ENCODE measurements at regions of chr3 and their contacts with region 1.

Region 1: GRCh38 chr3:151468284-151468917 is 7.5 kb upstream of the IGSF10 start:
- DNase-seq: peak; percentile 2 to 49 (median 23)
- H3K4me3 ChIP-seq: no peak overlapping the region
- H3K4me3 Mint-ChIP-seq: no peak overlapping the region
- H3K27ac ChIP-seq: no peak overlapping the region
- H3K27ac Mint-ChIP-seq: no peak overlapping the region
- H3K4me1 ChIP-seq: no peaks in the 10 kb centered on the region
- H3K4me1 Mint-ChIP-seq: no peaks in the 10 kb centered on the region
- H3K27me3 ChIP-seq: no peaks in the 10 kb centered on the region
- H3K27me3 Mint-ChIP-seq: peaks cover 10 to 23% of the 10 kb centered on the region in 2 donors

Region 2: DNA sequence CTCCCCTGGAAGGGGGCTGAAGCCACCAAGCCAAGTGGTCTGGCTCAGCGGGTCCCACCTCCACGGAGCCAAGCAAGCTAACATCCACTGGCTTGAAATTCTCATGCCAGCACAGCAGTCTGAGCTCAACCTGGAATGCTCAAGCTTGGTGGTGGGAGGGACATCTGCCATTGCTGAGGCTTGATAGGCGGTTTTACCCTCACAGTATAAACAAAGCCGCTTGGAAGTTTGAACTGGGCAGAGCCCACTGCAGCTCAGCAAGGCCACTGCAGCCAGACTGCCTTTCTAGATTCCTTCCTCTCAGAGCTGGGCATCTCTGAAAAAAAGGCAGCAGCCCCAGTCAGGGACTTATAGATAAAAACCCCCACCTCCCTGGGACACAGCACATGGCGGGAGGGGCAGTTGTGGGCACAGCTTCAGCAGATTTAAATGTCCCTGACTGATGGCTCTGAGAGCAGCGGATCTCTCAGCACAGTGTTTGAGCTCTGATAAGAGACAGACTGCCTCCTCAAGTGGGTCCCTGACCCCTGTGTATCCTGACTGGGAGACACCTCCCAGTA is 15.6 kb after region 1 on chr3:
- CTCF ChIA-PET with region 1: interaction called, 13 read pairs
- POLR2A ChIA-PET with region 1: no interaction called
- DNase-seq: no peak
- H3K4me3 ChIP-seq: no peak overlapping the region
- H3K4me3 Mint-ChIP-seq: no peak overlapping the region
- H3K27ac ChIP-seq: no peak overlapping the region
- H3K27ac Mint-ChIP-seq: no peak overlapping the region
- H3K4me1 ChIP-seq: no peaks in the 10 kb centered on the region
- H3K4me1 Mint-ChIP-seq: no peaks in the 10 kb centered on the region
- H3K27me3 ChIP-seq: no peaks in the 10 kb centered on the region
- H3K27me3 Mint-ChIP-seq: peaks cover 14 to 48% of the 10 kb centered on the region in 2 donors

Region 3: DNA sequence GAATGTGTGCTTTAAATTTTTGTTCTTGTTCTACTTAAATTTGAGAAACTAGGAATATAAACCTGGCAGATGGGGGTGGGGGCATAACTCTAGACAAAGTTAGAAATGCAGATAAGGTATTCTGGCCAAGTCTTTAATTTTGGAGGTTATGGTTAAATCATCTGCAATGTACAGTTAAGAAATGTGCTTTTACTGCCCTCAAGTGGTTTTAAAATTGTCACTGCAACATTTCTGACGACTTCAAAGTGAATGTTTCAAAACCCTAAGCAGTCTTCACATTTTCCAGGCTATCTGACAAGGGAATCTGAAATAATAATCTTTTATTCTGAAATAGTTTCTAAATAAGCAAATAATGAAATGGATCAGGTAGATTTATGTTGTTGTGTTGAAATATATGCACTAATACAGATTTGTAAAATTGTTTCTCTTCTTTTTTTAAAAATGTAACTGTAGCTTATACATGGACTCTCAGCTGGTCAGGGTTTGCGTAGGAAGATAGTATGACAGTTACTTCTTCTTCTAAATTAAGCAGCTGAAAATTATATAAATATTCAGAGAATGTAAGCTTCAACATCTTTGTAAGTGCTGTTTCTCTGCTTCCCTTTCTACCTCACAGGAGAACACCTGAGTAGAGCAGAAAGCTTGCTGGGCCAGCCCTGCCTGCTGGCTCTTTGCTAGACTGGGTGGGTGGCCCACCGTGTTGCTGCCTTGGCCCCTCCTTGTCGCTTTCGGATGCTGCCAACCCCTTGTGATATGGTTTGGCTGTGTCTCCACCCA is 450.0 kb after region 1 on chr3:
- CTCF ChIA-PET with region 1: interaction called, 16 read pairs
- POLR2A ChIA-PET with region 1: interaction called, 4 read pairs
- DNase-seq: peak in 2 of 5 donors; percentile 4 to 24
- H3K4me3 ChIP-seq: no peak overlapping the region
- H3K4me3 Mint-ChIP-seq: no peak overlapping the region
- H3K27ac ChIP-seq: no peak overlapping the region
- H3K27ac Mint-ChIP-seq: peak overlapping the region in 2 of 8 donors; percentile 23 to 70
- H3K4me1 ChIP-seq: no peaks in the 10 kb centered on the region
- H3K4me1 Mint-ChIP-seq: no peaks in the 10 kb centered on the region
- H3K27me3 ChIP-seq: no peaks in the 10 kb centered on the region
- H3K27me3 Mint-ChIP-seq: no peaks in the 10 kb centered on the region